PC-9 (cell line): ENCODE measurements at regions of chr12 and their contacts with region 1.

Region 1: DNA sequence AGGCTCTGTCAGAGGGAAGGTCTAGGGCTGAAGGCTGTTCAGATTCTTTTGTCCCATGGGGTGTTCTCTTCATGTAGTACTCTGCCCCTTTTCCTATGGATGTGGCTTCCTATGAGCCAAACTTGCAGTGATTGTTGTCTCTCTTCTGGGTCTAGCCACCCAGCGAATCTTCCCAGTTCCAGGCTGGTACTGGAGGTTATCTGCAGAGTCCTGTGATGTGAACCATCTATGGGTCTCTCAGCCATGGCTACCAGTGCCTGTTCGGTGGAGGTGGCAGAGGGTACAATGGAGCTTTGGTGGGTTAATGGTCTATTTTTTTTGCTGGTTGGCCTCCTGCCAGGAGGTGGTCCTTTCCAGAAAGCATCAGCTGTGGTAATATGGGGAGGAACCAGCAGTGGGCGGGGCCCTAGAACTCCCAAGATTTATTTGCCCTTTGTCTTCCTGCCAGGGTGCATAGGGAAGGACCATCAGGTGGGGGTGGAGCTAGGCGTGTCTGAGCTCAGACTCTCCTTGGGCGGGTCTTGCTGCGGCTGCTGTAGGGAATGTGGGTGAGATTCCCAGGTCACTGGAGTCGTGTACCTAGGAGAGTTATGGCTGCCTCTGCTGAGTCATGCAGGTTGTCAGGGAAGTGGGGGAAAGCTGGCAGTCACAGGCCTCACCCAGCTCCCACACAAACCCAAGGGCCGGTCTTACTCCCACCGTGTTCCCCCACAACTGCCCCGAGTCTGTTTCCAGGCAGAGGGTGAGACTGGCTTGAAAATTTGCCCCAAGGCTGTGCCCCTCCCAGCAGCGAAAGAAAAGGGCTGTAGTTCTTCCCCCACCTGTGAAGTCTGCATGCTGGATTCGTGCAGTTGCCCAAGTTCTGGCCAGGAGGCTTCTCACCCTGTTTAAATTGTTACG is 17.5 kb downstream of the MTRFR start:
- DNase-seq: peak; percentile 93 to 94
- H3K4me3 ChIP-seq: peak overlapping the region; percentile 37; the same call in 1 of the 2 replicates
- H3K27ac ChIP-seq: peak overlapping the region; percentile 94
- H3K4me1 ChIP-seq: peaks cover 33% of the 10 kb centered on the region
- H3K27me3 ChIP-seq: no peaks in the 10 kb centered on the region
- CTCF ChIP-seq: no peak

Region 2: GRCh38 chr12:123293178-123293760 is 42.5 kb after region 1 on chr12:
- CTCF ChIA-PET with region 1: no interaction called
- POLR2A ChIA-PET with region 1: no interaction called
- intact Hi-C with region 1: no loop called
- DNase-seq: no peak
- H3K4me3 ChIP-seq: no peak overlapping the region
- H3K27ac ChIP-seq: no peak overlapping the region
- H3K4me1 ChIP-seq: no peaks in the 10 kb centered on the region
- H3K27me3 ChIP-seq: no peaks in the 10 kb centered on the region
- CTCF ChIP-seq: no peak

Region 3: DNA sequence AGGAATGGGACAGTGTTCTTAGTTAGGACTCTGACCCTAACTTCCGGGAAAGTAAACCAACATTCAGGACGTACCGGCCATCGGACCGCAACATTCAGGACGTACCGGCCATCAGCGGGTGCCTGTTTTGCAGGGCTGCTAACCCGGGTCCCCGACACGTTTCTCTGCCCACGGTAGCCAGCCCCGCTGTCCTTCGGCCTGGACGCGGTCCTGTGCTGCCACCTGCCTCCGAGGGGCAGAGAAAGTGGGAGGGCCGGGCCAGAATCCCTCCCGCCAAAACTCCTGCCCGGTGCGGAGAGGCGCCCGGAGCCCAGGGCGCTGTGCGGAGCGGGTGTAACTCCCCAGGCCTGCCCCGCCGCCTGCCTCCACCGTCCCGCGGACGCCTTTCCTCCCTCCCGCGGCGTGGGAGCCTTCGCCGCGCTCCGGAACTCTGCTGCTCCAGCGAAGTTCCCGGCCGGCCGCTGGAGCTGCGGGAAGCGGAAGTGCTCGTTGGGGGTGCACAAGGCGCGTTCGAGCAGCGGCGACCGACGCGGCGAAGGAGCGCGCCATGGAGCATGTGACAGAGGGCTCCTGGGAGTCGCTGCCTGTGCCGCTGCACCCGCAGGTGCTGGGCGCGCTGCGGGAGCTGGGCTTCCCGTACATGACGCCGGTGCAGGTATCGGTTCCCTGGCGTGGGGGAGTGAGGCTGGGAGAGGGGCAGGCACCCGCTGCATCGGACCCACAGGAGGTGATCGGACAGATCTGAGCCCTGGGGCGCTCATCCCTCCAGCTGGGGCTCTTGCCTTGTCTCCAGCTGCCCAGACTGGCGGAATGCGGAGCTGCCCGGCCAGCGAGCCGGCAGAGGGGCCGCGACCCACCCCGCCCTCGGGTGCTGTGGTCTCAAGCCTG is 351.1 kb after region 1 on chr12 and contains the start of gene DDX55:
- CTCF ChIA-PET with region 1: no interaction called
- POLR2A ChIA-PET with region 1: interaction called, 13 read pairs
- intact Hi-C with region 1: no loop called
- DNase-seq: peak; percentile 63 to 79
- H3K4me3 ChIP-seq: peak within 1 kb of the TSS; percentile 97
- H3K27ac ChIP-seq: peak within 1 kb of the TSS; percentile 45
- H3K4me1 ChIP-seq: 0 out of 2 replicates have a peak, but pooled peaks cover 5% of the 10 kb centered on the region
- H3K27me3 ChIP-seq: no peaks in the 10 kb centered on the region
- CTCF ChIP-seq: peak; percentile 61
- total RNA-seq, gene DDX55: 17.5 and 19.5 TPM in 2 replicates